ENCODE measurements at regions of chr11 and their contacts with region 1.

Region 1: DNA sequence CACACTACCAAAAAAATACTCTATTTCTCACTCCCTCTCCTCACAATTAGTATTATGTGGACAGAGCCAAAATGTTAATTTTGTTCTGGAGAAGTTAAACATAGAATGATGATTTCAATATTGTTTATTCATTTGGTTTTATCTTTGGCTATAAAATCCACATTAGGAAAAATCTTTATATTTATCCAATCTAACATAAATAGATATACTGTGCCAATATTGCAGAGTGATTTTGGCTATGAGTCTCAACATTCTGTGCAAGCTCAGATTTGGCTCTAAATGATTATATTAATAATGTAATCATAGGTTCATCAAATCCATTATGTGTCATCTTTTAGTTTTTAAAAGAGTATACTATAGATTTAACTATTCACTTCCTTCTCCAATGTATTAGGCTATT is 667.5 kb upstream of the CHORDC1 start:
- DNase-seq: no peak
- ATAC-seq: no peak
- H3K4me3 ChIP-seq: no peak overlapping the region
- H3K4me3 Mint-ChIP-seq: no peak overlapping the region
- H3K27ac ChIP-seq: no peak overlapping the region
- H3K27ac Mint-ChIP-seq: no peak overlapping the region
- H3K4me1 ChIP-seq: no peaks in the 10 kb centered on the region
- H3K4me1 Mint-ChIP-seq: no peaks in the 10 kb centered on the region
- H3K27me3 ChIP-seq: no peaks in the 10 kb centered on the region
- H3K27me3 Mint-ChIP-seq: no peaks in the 10 kb centered on the region

Region 2: GRCh38 chr11:90930252-90930651 is 39.9 kb after region 1 on chr11:
- CTCF ChIA-PET with region 1: no interaction called
- POLR2A ChIA-PET with region 1: no interaction called
- intact Hi-C with region 1: loop called in 1 of 2 experiments (anchors 1 kb)
- DNase-seq: no peak
- ATAC-seq: no peak
- H3K4me3 ChIP-seq: no peak overlapping the region
- H3K4me3 Mint-ChIP-seq: no peak overlapping the region
- H3K27ac ChIP-seq: no peak overlapping the region
- H3K27ac Mint-ChIP-seq: no peak overlapping the region
- H3K4me1 ChIP-seq: no peaks in the 10 kb centered on the region
- H3K4me1 Mint-ChIP-seq: peaks cover 0 to 2% (median 0%) of the 10 kb centered on the region in 7 donors
- H3K27me3 ChIP-seq: no peaks in the 10 kb centered on the region
- H3K27me3 Mint-ChIP-seq: no peaks in the 10 kb centered on the region